SK-N-SH (cell line): ENCODE measurements at regions of chr5 and their contacts with region 1.

Region 1: GRCh38 chr5:151825445-151825844 is 53.7 kb downstream of the G3BP1 start:
- DNase-seq: peak; percentile 64
- H3K4me3 ChIP-seq: no peak overlapping the region
- H3K27ac ChIP-seq: no peak overlapping the region; a peak in 1 of 4 replicates
- H3K4me1 ChIP-seq: peaks cover 0 to 3% of the 10 kb centered on the region in 2 experiments; a peak in 1 of 4 replicates
- H3K27me3 ChIP-seq: no peaks in the 10 kb centered on the region
- CTCF ChIP-seq: peak; percentile 91
- EP300 ChIP-seq: no peak
- RAD21 ChIP-seq: peak; percentile 98

Region 2: DNA sequence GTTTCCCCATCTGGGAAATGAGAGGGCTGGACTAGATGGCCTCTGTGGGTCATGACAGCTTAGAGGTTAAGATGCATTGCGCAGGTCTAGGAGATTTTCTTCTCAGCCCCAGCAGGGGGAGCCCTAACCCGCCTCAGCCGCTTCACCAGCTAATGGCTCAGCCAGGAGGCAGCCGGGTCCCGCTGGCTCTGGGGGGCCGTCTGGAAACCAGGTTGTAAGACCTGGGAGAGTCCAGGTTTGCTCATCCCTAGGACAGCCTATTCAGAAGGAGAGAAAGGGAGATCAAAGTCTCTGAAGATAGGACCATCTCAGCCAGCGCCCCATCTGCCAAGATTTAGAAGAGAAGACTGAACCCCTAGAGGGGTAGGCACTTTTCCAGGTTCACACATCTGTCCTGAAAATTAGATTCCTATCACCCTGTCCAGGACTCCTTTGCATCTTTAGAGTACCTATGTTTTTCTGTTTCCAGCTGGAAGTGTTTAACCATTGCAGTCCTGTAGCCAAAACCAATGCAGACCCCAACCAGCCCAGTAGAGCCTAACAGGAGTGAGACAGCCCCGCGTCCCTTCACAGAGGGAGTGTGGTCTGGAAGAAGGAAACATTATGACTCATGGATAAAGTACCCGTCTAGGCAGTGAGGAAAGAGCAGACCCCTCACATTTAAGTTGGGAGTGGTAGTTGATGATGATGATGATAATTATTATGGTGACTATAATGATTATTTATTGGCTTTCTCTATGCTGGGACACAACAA is 166.3 kb before region 1 on chr5:
- CTCF ChIA-PET with region 1: no interaction called
- POLR2A ChIA-PET with region 1: no interaction called
- DNase-seq: peak; percentile 81
- H3K4me3 ChIP-seq: peak overlapping the region in 1 of 2 experiments; percentile 27; a peak in 1 of 4 replicates
- H3K27ac ChIP-seq: peak overlapping the region in 1 of 2 experiments; percentile 97; a peak in 2 of 4 replicates
- H3K4me1 ChIP-seq: peaks cover 5 to 12% of the 10 kb centered on the region in 2 experiments; a peak in 2 of 4 replicates
- H3K27me3 ChIP-seq: no peaks in the 10 kb centered on the region
- CTCF ChIP-seq: peak; percentile 89
- EP300 ChIP-seq: no peak
- RAD21 ChIP-seq: peak; percentile 96

Region 3: DNA sequence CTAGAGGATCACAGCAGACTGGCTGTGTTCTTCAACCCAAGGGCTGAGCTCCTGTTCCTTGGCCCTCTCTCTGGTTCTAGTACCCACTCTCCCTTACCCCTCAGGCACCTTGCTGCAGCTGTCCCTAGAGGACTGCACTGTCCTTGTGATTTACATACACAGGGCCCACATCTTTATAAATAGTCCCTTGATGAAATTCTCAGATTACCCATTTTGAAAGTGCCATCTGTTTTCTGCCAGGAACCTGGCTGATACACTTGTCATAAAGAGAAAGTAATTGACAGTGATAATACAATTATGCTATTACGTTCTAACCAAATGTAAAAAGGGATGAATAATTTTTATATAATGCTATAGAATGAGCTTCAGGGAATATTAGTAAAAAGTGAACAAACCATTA is 122.2 kb before region 1 on chr5:
- CTCF ChIA-PET with region 1: no interaction called
- POLR2A ChIA-PET with region 1: no interaction called
- DNase-seq: peak; percentile 84
- H3K4me3 ChIP-seq: no peak overlapping the region
- H3K27ac ChIP-seq: peak overlapping the region in 1 of 2 experiments; percentile 75; a peak in 2 of 4 replicates
- H3K4me1 ChIP-seq: peaks cover 12 to 24% of the 10 kb centered on the region in 2 experiments
- H3K27me3 ChIP-seq: no peaks in the 10 kb centered on the region
- CTCF ChIP-seq: no peak
- EP300 ChIP-seq: peak in 1 of 2 experiments; percentile 96; a peak in 2 of 4 replicates
- RAD21 ChIP-seq: peak; percentile 2; the same call in 1 of the 2 replicates

Region 4: GRCh38 chr5:151758430-151759241 is 66.8 kb before region 1 on chr5 and contains the start of gene ATOX1:
- CTCF ChIA-PET with region 1: no interaction called
- POLR2A ChIA-PET with region 1: no interaction called
- DNase-seq: peak; percentile 100
- H3K4me3 ChIP-seq: peak within 1 kb of the TSS; percentile 73 to 85
- H3K27ac ChIP-seq: peak within 1 kb of the TSS; percentile 59 to 72; a peak in 3 of 4 replicates
- H3K4me1 ChIP-seq: peaks cover 0 to 17% of the 10 kb centered on the region in 2 experiments; a peak in 1 of 4 replicates
- H3K27me3 ChIP-seq: no peaks in the 10 kb centered on the region
- CTCF ChIP-seq: no peak
- EP300 ChIP-seq: no peak
- RAD21 ChIP-seq: no peak
- polyA plus RNA-seq, gene ATOX1: 344 and 497 TPM in 2 replicates

Region 5: GRCh38 chr5:151815051-151815450 is 10.4 kb before region 1 on chr5:
- CTCF ChIA-PET with region 1: interaction called, 24 read pairs
- POLR2A ChIA-PET with region 1: no interaction called
- DNase-seq: no peak
- H3K4me3 ChIP-seq: no peak overlapping the region
- H3K27ac ChIP-seq: no peak overlapping the region
- H3K4me1 ChIP-seq: no peaks in the 10 kb centered on the region; a peak in 1 of 4 replicates
- H3K27me3 ChIP-seq: no peaks in the 10 kb centered on the region
- CTCF ChIP-seq: no peak
- EP300 ChIP-seq: no peak
- RAD21 ChIP-seq: no peak

Region 6: DNA sequence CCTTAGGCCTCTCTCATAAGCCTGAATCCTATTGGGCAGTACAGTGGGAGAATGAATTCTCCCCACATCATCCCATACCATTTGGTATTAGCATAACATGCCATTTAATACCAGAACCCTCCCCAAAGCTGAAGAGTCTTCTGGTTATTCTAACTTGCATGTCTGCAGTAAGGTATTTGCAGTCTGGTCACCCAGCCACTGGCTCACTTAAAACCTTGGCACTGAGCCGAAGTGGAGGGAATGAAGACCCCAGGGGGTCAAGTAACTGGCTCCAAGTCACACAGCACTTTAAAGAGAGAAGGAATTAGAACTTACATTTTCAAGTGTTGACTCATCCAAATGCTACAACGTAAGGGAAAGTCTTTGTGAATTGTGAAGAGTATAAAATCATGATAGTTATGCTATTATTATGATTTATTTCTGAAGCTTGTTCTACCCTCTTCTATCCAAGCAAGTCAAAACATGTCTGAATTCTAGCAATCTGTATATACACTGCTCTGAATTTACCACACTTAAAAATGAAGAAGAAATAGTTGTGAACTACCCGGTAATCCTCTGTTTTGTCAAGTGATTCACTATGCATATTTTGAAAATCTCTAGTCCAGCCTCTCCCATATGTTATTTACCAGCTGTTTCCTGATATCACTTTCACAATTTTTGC is 70.7 kb after region 1 on chr5:
- CTCF ChIA-PET with region 1: no interaction called
- POLR2A ChIA-PET with region 1: no interaction called
- DNase-seq: no peak
- H3K4me3 ChIP-seq: peak overlapping the region in 1 of 2 experiments; percentile 0; a peak in 1 of 4 replicates
- H3K27ac ChIP-seq: peak overlapping the region in 1 of 2 experiments; percentile 31; a peak in 3 of 4 replicates
- H3K4me1 ChIP-seq: peaks cover 0 to 9% of the 10 kb centered on the region in 2 experiments; a peak in 1 of 4 replicates
- H3K27me3 ChIP-seq: no peaks in the 10 kb centered on the region
- CTCF ChIP-seq: no peak
- EP300 ChIP-seq: no peak; a peak in 1 of 4 replicates
- RAD21 ChIP-seq: no peak

Region 7: GRCh38 chr5:152142840-152143469 is 317.5 kb after region 1 on chr5:
- CTCF ChIA-PET with region 1: interaction called, 158 read pairs
- POLR2A ChIA-PET with region 1: interaction called, 5 read pairs
- DNase-seq: peak; percentile 66
- H3K4me3 ChIP-seq: no peak overlapping the region
- H3K27ac ChIP-seq: no peak overlapping the region
- H3K4me1 ChIP-seq: no peaks in the 10 kb centered on the region
- H3K27me3 ChIP-seq: no peaks in the 10 kb centered on the region
- CTCF ChIP-seq: peak; percentile 90
- EP300 ChIP-seq: no peak
- RAD21 ChIP-seq: peak; percentile 77

Region 8: DNA sequence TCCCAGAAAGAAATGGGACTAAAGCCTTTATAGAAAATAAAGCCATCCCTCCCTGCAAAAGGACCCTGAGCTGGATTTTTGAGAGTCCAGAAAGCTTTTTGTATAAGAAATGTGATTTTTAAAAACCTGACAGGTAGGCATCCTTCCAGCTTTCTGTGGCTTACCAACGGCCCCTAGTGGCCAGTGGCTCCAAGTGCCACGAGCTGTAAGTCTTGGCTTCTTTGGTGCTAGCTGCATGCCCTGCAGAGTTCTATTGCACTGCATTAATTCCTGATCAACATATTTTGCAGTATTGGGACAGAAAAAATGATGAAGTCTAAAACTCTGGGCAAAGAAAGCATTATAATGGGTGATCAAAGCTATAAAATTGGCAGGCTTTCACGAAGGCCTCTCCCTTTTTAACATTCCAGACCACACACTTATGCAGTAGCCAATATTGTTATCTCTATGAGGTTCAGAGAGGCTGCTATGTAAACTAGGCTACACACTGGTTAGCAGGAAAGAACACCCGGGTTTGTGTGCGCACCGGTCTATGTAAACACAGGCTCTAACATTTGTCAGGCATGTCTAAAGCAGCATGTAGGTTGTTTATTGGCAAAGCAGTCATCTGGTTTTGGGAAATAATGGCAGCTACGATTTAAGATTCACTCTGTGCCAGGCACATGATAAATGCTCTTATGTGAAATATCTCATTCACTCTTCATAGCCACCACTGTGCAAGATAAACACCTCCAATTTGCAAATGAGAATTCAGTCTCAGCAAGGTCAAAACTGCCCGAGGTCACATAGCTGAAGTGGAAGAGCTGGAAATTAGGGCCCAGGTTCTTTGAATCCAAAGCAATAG is 524.5 kb after region 1 on chr5:
- CTCF ChIA-PET with region 1: interaction called, 21 read pairs
- POLR2A ChIA-PET with region 1: no interaction called
- DNase-seq: peak; percentile 45
- H3K4me3 ChIP-seq: peak overlapping the region in 1 of 2 experiments; percentile 36; a peak in 1 of 4 replicates
- H3K27ac ChIP-seq: no peak overlapping the region
- H3K4me1 ChIP-seq: no peaks in the 10 kb centered on the region
- H3K27me3 ChIP-seq: no peaks in the 10 kb centered on the region
- CTCF ChIP-seq: peak; percentile 83
- EP300 ChIP-seq: no peak
- RAD21 ChIP-seq: peak; percentile 65